ENCODE measurements at regions of chr9 and their contacts with region 1.

Region 1: DNA sequence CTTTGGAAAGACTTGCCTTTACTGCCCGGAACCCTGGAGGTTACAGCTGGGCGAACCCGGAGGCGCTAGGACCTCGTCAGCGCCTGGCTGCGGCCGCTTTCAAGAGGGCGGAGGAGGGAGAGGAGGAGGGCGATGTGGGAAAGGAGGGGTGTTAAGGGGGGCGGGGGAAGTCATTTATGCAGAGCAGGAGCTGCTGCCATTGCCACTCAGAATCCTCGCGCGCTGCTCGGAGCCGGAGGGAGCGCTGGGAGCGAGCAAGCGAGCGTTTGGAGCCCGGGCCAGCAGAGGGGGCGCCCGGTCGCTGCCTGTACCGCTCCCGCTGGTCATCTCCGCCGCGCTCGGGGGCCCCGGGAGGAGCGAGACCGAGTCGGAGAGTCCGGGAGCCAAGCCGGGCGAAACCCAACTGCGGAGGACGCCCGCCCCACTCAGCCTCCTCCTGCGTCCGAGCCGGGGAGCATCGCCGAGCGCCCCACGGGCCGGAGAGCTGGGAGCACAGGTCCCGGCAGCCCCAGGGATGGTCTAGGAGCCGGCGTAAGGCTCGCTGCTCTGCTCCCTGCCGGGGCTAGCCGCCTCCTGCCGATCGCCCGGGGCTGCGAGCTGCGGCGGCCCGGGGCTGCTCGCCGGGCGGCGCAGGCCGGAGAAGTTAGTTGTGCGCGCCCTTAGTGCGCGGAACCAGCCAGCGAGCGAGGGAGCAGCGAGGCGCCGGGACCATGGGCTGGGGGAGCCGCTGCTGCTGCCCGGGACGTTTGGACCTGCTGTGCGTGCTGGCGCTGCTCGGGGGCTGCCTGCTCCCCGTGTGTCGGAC is at the start of gene PCSK5:
- DNase-seq: peak; percentile 95
- H3K4me3 Mint-ChIP-seq: peak within 1 kb of the TSS; percentile 94
- H3K27ac Mint-ChIP-seq: peak within 1 kb of the TSS; percentile 74
- H3K4me1 Mint-ChIP-seq: peaks cover 27% of the 10 kb centered on the region
- H3K27me3 Mint-ChIP-seq: peaks cover 46% of the 10 kb centered on the region
- total RNA-seq, gene PCSK5: 1.6 and 1.9 TPM in 2 replicates

Region 2: DNA sequence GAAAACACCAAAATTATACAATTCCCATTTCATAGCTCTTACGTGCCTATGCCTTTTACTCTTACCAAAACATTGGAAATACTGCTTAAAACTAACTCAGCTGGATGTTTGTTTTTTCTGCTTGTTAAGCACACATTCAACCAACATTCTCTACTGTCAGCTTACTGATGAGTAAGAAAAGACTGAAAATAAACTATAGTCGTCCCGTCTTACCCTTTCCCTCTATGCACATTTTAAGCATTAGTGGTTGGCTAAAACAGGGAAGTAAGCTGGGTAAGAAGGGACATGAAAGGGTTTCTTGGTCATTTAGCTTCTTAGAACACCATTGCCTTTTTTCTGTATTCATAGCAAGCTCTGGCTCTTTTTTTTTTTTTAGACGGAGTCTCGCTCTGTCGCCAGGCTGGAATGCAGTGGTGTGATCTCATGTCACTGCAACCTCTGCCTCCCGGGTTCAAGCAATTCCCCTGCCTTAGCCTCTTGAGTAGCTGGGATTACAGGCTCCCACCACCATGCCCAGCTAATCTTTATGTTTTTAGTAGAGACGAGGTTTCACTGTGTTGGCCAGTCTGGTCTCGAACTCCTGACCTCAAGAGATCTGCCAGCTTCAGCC is 232.3 kb before region 1 on chr9:
- intact Hi-C with region 1: no loop called
- DNase-seq: no peak
- H3K4me3 Mint-ChIP-seq: no peak overlapping the region
- H3K27ac Mint-ChIP-seq: no peak overlapping the region
- H3K4me1 Mint-ChIP-seq: no peaks in the 10 kb centered on the region
- H3K27me3 Mint-ChIP-seq: peaks cover 4% of the 10 kb centered on the region

Region 3: DNA sequence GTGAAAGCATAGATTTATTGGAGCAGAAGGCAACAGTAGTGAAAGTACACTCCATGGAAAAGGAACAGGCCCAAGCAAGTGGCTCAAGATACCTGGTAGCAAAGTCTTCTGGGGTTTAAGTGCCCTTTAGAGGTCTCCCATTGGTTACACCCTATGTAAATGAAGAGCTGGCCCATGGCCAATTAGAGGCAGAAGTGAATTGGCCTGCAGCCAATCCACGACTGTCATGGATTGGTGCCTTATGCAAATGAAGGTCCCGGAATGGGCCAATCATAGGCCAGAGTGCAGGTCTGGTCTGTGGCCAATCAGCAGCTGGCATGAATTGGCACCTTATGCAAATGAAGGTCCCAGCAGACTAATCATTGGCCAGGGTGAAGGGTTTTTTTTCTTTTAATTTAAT is 64.4 kb before region 1 on chr9:
- intact Hi-C with region 1: loop called (anchors 10 kb)
- DNase-seq: no peak
- H3K4me3 Mint-ChIP-seq: no peak overlapping the region
- H3K27ac Mint-ChIP-seq: no peak overlapping the region
- H3K4me1 Mint-ChIP-seq: no peaks in the 10 kb centered on the region
- H3K27me3 Mint-ChIP-seq: no peaks in the 10 kb centered on the region

Region 4: DNA sequence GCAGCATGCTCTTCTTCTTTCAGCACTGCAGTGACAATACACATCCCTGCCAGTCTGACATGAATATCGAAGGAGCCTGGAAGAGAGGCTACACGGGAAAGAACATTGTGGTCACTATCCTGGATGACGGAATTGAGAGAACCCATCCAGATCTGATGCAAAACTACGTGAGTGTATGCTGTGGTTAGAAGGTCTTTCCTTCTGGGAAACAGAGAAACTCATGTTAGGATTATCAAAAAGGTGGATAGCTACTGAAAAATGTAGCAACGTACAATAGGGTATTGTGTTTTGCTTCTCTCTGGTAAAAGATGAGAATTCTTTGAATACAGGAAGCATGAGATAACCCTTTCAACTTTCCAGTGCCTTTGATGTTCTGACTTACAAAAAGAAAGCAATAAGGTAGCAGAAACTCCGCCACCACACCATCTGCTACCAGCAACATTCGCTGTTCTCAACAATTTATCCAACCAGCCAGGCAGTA is 133.1 kb after region 1 on chr9:
- intact Hi-C with region 1: loop called (anchors 5 kb)
- DNase-seq: peak; percentile 87
- H3K4me3 Mint-ChIP-seq: peak overlapping the region; percentile 72
- H3K27ac Mint-ChIP-seq: peak overlapping the region; percentile 74
- H3K4me1 Mint-ChIP-seq: peaks cover 68% of the 10 kb centered on the region
- H3K27me3 Mint-ChIP-seq: no peaks in the 10 kb centered on the region

Measured in activated CD4-positive, alpha-beta T cell treated with anti-CD3 and anti-CD28 coated beads, Interleukin-2, amount 10 ng/mL, durations not matched to agents 24 days and 14 days (primary cell).